MCF 10A (cell line): ENCODE measurements at regions of chr6 and their contacts with region 1.

Region 1: DNA sequence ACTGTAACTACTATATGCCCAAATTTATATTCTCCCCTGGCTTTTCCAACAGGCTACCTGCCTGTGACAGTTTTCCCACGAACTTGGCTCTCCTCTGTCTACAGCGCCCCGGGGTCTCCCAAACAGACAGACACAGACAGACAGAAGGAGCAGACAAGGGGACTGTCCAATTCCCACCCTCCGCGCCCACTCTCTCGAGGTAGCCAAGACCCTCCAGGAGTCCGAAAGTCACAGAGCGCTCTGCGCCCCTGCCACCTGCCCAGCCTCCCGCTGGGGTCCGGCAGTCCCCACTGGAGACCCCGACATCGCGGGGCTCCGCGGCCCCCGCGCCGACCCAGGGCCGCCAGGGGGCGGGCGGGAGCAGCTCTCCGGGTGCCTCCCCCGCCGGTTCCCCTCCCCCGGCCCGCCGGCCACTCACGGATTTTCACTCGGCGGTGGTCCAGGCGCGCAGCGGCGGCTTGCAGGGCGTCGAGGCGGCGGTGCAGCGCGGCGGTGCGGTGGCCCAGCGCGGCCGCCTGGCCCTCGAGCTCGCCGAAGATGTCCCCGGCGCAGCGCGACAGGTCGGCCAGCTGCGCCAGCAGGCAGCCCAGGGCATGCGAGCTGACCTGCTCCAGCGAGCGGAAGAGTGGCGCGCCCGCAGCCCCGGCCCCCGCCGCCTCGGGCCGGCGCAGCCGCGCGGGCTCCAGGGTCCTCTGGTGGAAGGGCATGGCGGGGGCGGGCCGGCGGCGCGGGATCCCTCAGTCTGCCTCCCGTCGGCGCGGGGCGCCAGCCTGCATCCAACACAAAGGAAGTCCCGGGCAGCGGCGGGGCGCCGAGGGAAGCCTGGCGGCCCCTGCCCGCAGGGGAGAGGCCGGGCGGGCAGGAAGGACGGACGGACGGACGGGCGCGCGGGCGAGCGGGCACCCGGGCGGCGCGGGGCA is 81.3 kb upstream of the CCDC28A start:
- DNase-seq: peak; percentile 57
- H3K4me3 Mint-ChIP-seq: peak overlapping the region; percentile 90
- H3K27ac Mint-ChIP-seq: peak overlapping the region; percentile 87
- H3K4me1 Mint-ChIP-seq: peaks cover 11% of the 10 kb centered on the region
- H3K27me3 Mint-ChIP-seq: no peaks in the 10 kb centered on the region
- CTCF ChIP-seq: peak; percentile 92

Region 2: DNA sequence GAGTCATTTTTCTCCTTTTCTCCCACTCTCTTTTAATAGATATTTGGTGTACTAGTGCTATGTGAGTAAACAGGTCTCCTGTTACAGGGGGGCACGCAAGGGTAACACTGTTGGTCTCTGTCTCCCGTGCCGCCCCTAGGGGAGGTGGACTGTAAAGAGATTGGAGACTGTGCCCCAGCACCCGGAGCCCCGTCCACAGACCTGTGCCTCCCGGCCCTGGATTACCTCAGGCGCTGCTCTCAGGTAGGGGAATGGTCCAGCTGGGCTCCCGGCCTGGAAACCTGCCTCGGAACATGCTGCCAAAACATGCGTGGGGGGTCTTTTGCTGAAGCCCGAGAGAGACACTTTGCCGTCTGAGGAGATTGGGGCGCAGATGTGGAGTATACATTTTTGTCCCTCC is 381.1 kb before region 1 on chr6:
- CTCF ChIA-PET with region 1: no interaction called
- POLR2A ChIA-PET with region 1: no interaction called
- intact Hi-C with region 1: no loop called
- DNase-seq: no peak
- H3K4me3 Mint-ChIP-seq: no peak overlapping the region
- H3K27ac Mint-ChIP-seq: no peak overlapping the region
- H3K4me1 Mint-ChIP-seq: no peaks in the 10 kb centered on the region
- H3K27me3 Mint-ChIP-seq: no peaks in the 10 kb centered on the region
- CTCF ChIP-seq: no peak

Region 3: DNA sequence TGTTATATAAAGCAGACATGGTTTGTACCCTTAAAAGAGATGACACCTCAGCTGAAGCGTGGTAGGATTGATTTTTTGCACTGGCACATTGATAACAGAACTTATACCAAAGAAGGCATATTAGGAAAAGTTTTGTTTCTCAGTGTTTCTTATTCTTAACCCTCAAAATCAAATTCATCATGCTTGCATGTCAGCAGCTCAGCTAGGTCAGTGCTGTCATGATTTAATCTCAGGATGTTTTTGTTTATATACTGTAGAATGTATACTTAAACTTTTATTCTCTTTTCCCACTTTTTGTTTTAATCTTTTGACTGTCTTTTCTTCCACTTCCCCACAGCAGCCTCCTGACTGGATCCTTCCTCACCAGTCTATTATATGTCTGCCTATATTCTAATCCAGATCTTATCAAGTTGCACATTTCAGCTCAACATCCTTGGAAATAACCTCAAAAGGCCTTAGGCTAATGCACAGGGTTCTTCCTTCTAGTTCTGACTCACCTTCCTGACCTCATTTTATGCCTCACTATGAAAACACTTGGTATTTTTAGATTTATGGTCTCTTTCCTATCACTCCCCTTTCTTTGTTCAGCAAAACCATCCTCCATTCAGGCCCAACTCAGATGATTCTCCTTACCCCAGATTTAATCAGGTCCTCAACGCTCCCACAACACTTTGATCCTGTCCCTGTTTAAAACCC is 281.2 kb before region 1 on chr6:
- CTCF ChIA-PET with region 1: no interaction called
- POLR2A ChIA-PET with region 1: no interaction called
- intact Hi-C with region 1: loop called (anchors 10 kb)
- DNase-seq: peak; percentile 89
- H3K4me3 Mint-ChIP-seq: peak overlapping the region; percentile 7
- H3K27ac Mint-ChIP-seq: peak overlapping the region; percentile 29
- H3K4me1 Mint-ChIP-seq: peaks cover 37% of the 10 kb centered on the region
- H3K27me3 Mint-ChIP-seq: no peaks in the 10 kb centered on the region
- CTCF ChIP-seq: no peak

Region 4: DNA sequence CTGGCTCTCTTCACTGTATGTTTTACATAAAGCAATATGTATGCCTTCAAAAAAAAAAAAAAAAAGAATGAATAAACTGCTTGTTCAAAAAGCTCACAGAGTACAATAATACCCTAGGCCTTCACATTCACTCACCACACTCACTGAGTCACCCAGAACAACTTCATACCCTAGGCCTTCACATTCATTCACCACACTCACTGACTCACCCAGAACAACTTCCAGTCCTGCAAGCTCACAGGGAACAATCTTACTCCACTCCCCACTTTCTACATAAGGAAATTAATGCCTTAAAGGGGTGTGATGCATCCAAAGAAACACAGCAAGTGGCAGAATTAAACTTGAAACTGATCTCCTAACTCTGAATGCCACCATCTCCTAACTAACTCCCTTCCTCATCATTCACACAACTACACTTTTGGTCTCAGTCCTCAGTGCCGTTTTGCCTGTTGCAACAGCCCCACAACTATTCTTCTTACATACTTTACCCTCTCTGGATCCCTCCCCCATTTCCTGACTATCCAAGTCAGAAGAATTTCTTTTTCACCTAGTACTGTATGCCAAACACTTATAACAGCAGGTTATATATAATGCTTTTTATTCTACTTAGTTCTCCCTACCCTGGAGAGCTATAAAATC is 227.2 kb before region 1 on chr6:
- CTCF ChIA-PET with region 1: no interaction called
- POLR2A ChIA-PET with region 1: no interaction called
- intact Hi-C with region 1: no loop called
- DNase-seq: peak; percentile 95
- H3K4me3 Mint-ChIP-seq: peak overlapping the region; percentile 16
- H3K27ac Mint-ChIP-seq: peak overlapping the region; percentile 75
- H3K4me1 Mint-ChIP-seq: peaks cover 45% of the 10 kb centered on the region
- H3K27me3 Mint-ChIP-seq: no peaks in the 10 kb centered on the region
- CTCF ChIP-seq: no peak

Region 5: DNA sequence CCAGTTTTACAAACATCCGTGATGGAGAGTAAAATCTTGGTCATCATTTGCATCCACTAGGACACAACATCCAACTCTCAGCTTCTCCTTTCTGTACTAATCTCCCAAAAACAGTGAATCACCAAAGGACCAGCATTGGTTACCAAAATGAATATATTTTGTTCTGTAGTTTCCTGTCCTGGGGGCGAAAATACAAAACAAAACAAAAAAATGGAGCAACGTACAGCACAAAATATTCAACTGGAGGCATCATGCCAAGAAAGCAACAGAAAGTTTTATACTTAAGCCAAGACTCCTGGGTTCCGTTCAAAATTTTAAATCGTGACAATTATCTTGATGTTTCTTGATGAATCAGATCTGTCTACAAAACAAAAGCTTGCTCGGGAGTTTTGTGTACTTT is 45.3 kb before region 1 on chr6:
- CTCF ChIA-PET with region 1: interaction called, 11 read pairs
- POLR2A ChIA-PET with region 1: interaction called, 92 read pairs
- intact Hi-C with region 1: no loop called
- DNase-seq: peak; percentile 81
- H3K4me3 Mint-ChIP-seq: peak overlapping the region; percentile 72
- H3K27ac Mint-ChIP-seq: peak overlapping the region; percentile 87
- H3K4me1 Mint-ChIP-seq: peaks cover 7% of the 10 kb centered on the region
- H3K27me3 Mint-ChIP-seq: no peaks in the 10 kb centered on the region
- CTCF ChIP-seq: no peak

Region 6: DNA sequence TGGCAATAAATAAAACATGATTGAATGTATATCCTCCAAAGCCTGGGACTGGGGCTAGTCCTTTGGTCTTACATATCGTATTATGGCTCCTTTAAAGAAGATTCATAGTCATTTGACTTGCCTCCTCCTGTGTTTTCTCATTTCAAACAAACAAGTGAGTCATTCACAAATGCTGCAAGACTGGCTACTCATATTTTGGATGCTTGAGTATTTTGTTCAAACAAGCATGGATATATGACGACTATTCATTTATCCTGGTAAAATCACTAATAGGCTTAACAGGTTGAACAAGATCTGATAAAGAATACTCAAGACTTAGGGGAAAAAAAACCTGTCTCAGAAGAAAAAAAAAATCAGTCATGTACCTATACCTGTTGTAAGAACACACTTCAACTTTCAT is 29.8 kb before region 1 on chr6:
- CTCF ChIA-PET with region 1: interaction called, 17 read pairs
- POLR2A ChIA-PET with region 1: interaction called, 103 read pairs
- intact Hi-C with region 1: no loop called
- DNase-seq: peak; percentile 69
- H3K4me3 Mint-ChIP-seq: peak overlapping the region; percentile 11
- H3K27ac Mint-ChIP-seq: peak overlapping the region; percentile 47
- H3K4me1 Mint-ChIP-seq: no peaks in the 10 kb centered on the region
- H3K27me3 Mint-ChIP-seq: no peaks in the 10 kb centered on the region
- CTCF ChIP-seq: no peak

Region 7: GRCh38 chr6:138736640-138737039 is 44.3 kb after region 1 on chr6:
- CTCF ChIA-PET with region 1: no interaction called
- POLR2A ChIA-PET with region 1: no interaction called
- intact Hi-C with region 1: no loop called
- DNase-seq: no peak
- H3K4me3 Mint-ChIP-seq: no peak overlapping the region
- H3K27ac Mint-ChIP-seq: no peak overlapping the region
- H3K4me1 Mint-ChIP-seq: no peaks in the 10 kb centered on the region
- H3K27me3 Mint-ChIP-seq: no peaks in the 10 kb centered on the region
- CTCF ChIP-seq: no peak

Region 8: GRCh38 chr6:139364302-139364981 is 672.1 kb after region 1 on chr6:
- CTCF ChIA-PET with region 1: no interaction called
- POLR2A ChIA-PET with region 1: no interaction called
- intact Hi-C with region 1: loop called (anchors 5 kb)
- DNase-seq: peak; percentile 53
- H3K4me3 Mint-ChIP-seq: no peak overlapping the region
- H3K27ac Mint-ChIP-seq: no peak overlapping the region
- H3K4me1 Mint-ChIP-seq: no peaks in the 10 kb centered on the region
- H3K27me3 Mint-ChIP-seq: no peaks in the 10 kb centered on the region
- CTCF ChIP-seq: peak; percentile 66